K562 (cell line): ENCODE measurements at regions of chr6 and their contacts with region 1.

Region 1: DNA sequence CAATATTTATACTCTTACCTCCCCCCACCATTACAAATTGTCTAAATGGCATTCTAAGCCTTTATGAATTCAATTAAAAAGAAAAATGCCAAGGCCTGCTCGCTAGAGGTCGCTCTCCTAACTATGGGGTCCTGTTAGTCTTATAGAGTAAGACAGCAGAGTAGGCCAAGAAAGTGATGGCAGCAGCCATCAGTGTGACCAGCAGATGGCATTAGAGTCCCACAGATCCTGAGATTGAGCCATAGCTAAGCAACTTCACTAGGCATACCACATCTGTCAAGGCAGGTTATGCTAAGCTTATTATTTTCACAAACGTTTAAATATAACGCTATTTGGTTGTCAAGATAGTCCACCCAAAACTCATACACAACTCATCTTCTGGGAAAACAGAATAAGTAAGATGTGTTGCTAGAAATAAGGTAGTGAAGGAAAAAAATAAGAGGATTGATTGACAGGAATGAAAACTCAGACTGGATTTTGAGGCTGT is 57.6 kb upstream of the SCAF8 start:
- DNase-seq: peak; percentile 95 to 96 (median 95)
- ATAC-seq: peak; percentile 99
- H3K4me3 ChIP-seq: no peak overlapping the region
- H3K27ac ChIP-seq: no peak overlapping the region
- H3K4me1 ChIP-seq: no peaks in the 10 kb centered on the region; a peak in 1 of 5 replicates
- H3K27me3 ChIP-seq: peaks cover 0 to 7% of the 10 kb centered on the region in 2 experiments; a peak in 3 of 5 replicates
- CTCF ChIP-seq: peak; percentile 100
- EP300 ChIP-seq: peak; percentile 35; the same call in 1 of the 2 replicates
- POLR2A ChIP-seq: no peak
- RAD21 ChIP-seq: peak; percentile 100

Region 2: DNA sequence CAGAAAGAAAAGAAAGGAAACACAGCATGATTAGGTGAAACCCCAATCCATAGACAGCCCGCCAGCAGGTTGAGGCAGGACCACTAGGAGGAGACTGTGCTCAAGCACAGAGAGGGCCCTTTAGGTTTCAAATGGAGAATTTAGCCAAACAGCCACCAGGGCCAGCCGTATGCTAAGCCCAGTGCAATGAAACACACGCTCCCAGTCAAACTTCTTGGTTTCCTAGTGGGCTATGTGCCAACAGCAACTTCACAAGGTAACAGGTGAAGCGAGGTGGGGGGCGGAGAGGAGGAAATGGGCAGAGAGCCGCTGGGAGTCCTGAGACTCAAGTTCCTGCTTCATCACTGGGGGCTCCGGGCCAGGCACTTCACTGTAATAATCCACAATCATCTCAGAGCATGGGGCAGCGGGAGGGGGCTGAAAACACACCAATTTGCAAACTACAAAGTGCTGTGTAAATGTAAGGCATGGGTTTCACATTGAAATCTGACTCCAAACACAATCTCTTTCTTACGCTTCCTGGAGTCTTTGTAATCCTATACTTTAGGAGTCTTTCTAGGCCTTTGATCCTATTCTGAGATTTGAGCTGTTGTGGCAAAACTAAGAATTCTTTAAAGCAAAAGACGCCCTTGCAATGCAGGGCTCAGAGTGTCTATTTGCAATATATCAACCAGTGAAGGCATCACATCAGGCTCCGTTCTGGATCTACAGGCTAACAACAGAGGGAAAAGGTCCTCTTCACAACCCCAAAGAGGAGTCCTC is 519.3 kb before region 1 on chr6:
- CTCF ChIA-PET with region 1: interaction called, 8 read pairs
- POLR2A ChIA-PET with region 1: no interaction called
- in situ Hi-C with region 1: loop called (anchors 10 kb)
- intact Hi-C with region 1: loop called (anchors 5 kb)
- DNase-seq: peak in 3 of 4 experiments; percentile 18 to 37 (median 21)
- ATAC-seq: peak; percentile 97
- H3K4me3 ChIP-seq: no peak overlapping the region
- H3K27ac ChIP-seq: no peak overlapping the region
- H3K4me1 ChIP-seq: no peaks in the 10 kb centered on the region
- H3K27me3 ChIP-seq: peaks cover 0 to 2% of the 10 kb centered on the region in 2 experiments; a peak in 1 of 5 replicates
- CTCF ChIP-seq: peak; percentile 64 to 78 (median 74)
- EP300 ChIP-seq: no peak
- POLR2A ChIP-seq: no peak
- RAD21 ChIP-seq: peak; percentile 18 to 50; a peak in 3 of 4 replicates

Region 3: GRCh38 chr6:154800338-154800737 is 124.7 kb after region 1 on chr6:
- CTCF ChIA-PET with region 1: interaction called, 59 read pairs
- POLR2A ChIA-PET with region 1: no interaction called
- in situ Hi-C with region 1: loop called (anchors 5 kb)
- intact Hi-C with region 1: loop called (anchors 1 kb)
- DNase-seq: no peak
- ATAC-seq: no peak
- H3K4me3 ChIP-seq: no peak overlapping the region
- H3K27ac ChIP-seq: no peak overlapping the region
- H3K4me1 ChIP-seq: no peaks in the 10 kb centered on the region
- H3K27me3 ChIP-seq: no peaks in the 10 kb centered on the region
- CTCF ChIP-seq: no peak
- EP300 ChIP-seq: no peak
- POLR2A ChIP-seq: no peak
- RAD21 ChIP-seq: no peak

Region 4: DNA sequence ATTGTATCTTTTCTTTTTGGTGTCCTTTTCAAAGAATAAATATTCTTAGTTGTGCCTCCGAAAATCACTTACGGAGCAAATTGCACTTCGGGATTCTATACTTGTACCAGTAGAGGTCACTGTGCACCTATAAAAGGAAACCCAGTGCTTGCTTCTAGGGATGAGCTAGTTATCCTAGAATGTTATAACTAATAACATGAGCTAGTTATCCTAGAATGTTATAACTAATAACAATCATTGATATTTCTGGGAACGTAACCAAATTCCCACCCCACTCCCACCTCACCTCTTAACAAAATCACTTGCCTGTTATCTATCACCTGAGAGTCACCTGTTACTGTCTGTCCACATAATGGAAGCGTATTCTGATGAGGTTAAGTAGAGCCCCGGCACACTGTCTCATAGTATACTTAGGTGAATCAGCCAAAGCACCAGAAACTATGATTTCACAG is 192.5 kb after region 1 on chr6:
- CTCF ChIA-PET with region 1: interaction called, 7 read pairs
- POLR2A ChIA-PET with region 1: no interaction called
- in situ Hi-C with region 1: no loop called
- intact Hi-C with region 1: loop called (anchors 5 kb)
- DNase-seq: peak; percentile 42 to 63 (median 50)
- ATAC-seq: peak; percentile 84
- H3K4me3 ChIP-seq: no peak overlapping the region
- H3K27ac ChIP-seq: no peak overlapping the region
- H3K4me1 ChIP-seq: no peaks in the 10 kb centered on the region; a peak in 1 of 5 replicates
- H3K27me3 ChIP-seq: no peaks in the 10 kb centered on the region
- CTCF ChIP-seq: peak; percentile 63 to 82 (median 75)
- EP300 ChIP-seq: no peak
- POLR2A ChIP-seq: no peak
- RAD21 ChIP-seq: peak; percentile 75 to 77

Region 5: DNA sequence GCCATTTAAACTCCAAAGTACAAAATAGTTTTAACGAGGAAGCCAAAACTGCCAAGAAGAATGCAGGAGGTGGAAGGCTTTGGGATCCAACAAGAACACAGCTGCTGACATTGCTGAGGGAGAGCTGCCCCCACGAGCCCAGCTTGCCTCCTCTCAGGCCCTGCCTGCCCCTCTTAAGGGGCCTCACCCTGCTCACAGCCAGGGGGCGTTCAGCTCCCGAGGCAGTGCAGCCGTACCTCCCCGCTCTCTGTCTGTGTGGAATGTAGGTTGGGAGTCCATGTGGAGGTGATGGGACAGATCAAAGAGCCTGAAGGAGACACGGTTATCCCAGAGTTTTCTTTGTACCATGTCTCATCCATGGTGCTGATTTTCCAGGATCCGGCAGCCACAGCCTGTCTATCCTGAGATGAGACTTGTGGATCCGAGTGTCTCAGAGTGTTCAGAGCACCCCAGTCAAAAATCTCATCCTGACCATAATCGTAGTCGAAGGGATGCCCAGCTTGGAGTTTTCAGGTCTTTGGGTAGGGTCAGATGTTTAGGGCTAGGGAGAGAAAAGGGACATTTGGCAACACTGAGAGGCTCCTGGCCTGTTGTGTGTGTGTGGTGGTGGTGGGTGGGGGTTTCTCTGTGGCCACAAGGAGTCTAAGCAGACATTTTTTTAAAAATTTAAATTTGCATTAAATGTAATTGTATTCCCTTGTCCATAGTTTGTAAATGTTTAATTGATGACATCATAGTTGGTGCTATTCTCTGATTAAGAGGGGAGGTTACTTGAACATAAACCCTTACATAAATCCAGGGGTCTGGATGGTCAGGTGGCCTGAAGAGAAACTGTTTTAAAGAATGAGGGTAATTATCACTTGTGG is 476.8 kb after region 1 on chr6:
- CTCF ChIA-PET with region 1: no interaction called
- POLR2A ChIA-PET with region 1: no interaction called
- in situ Hi-C with region 1: no loop called
- intact Hi-C with region 1: loop called (anchors 1 kb)
- DNase-seq: peak; percentile 53 to 69 (median 62)
- ATAC-seq: peak; percentile 95
- H3K4me3 ChIP-seq: no peak overlapping the region
- H3K27ac ChIP-seq: no peak overlapping the region
- H3K4me1 ChIP-seq: peaks cover 3 to 14% of the 10 kb centered on the region in 2 experiments; a peak in 4 of 5 replicates
- H3K27me3 ChIP-seq: peaks cover 20 to 32% of the 10 kb centered on the region in 2 experiments
- CTCF ChIP-seq: peak; percentile 75 to 91 (median 87)
- EP300 ChIP-seq: no peak
- POLR2A ChIP-seq: no peak
- RAD21 ChIP-seq: peak in 1 of 2 experiments; percentile 75; a peak in 2 of 4 replicates

Region 6: DNA sequence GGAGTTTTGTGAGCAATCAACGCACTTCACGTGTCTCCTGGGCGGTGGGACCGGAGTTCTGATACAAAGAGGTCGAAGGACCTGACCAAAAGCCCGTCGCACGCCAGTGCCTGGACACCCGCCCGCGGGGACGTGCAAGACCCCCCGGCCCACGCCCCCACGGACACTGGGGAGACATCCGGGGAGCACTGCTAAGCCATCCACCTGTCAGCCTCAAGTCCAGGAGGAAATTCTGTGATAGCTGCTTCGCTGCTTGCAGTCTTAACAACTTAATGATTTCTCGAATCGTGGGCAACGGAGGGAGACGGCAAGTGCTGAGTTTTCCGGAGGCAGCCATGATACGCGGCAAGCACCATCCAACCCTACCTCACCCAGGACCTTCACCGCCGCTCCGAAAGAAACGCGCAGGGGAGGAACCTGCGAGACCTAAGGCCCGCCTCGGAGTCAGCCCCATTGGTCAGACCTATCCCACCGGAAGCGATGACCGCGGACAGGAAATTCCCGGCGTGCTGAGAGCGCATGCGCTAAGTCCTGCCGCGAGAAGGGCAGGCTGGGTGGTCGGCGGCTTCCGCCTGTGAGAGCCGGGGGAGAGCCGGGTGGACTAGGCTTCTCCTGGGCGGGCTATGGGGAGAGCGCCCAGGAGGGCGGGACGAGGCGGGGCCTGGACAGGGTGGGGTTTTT is 638.6 kb after region 1 on chr6 and contains the start of gene TFB1M:
- CTCF ChIA-PET with region 1: no interaction called
- POLR2A ChIA-PET with region 1: no interaction called
- in situ Hi-C with region 1: no loop called
- intact Hi-C with region 1: loop called (anchors 5 kb)
- DNase-seq: peak; percentile 95 to 100 (median 96)
- ATAC-seq: peak; percentile 98
- H3K4me3 ChIP-seq: peak within 1 kb of the TSS; percentile 88
- H3K27ac ChIP-seq: peak within 1 kb of the TSS; percentile 94
- H3K4me1 ChIP-seq: peaks cover 4 to 7% of the 10 kb centered on the region in 2 experiments; a peak in 3 of 5 replicates
- H3K27me3 ChIP-seq: no peaks in the 10 kb centered on the region
- CTCF ChIP-seq: 0 out of 6 replicates have a peak, but pooled peaks of 1 of the 3 experiments have one; percentile 2
- EP300 ChIP-seq: 0 out of 2 replicates have a peak, but pooled peaks have one; percentile 5
- POLR2A ChIP-seq: peak; percentile 96
- RAD21 ChIP-seq: no peak
- polyA plus RNA-seq, gene TFB1M: 129 to 145 TPM